Aorta (tissue), 5 donors: ENCODE measurements at regions of chr1 and their contacts with region 1.

Region 1: DNA sequence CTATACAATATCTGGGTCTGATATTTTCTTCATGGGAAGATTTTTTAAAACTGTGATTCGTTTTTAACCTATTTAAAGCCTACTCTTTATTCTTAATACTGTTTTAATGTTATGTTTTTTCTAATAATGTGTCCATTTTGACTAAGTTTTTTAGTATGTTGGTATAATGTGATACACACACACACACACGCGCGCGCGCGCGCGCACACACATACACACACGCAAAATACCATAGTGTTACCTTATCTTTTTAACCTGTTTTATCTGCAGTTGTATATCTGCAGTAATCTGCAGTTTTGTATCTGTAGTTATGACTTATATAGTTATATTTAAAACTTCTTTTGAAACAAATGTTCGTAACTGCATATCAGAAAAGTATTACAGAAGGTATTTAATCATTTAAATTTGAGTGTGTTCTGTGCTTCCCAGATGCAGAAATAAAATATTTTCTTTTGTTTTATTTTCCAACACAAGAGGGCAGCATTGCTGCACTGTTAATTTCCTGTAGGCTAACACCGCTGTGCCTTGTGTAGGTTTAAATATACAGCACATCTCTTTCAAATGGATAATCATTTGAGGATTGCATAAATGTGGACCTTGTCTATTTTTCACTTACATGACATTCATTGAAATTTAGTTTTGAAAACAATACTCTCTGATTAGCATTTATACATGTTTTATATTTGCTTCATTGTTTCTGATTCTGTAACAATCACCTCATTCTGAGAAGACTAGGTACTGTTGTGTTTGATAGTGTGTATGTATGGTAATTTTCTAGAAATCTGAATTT is 166.1 kb downstream of the PDE4B start:
- DNase-seq: no peak
- ATAC-seq: peak; percentile 76
- H3K4me3 ChIP-seq: no peak overlapping the region
- H3K27ac ChIP-seq: no peak overlapping the region
- H3K4me1 ChIP-seq: no peaks in the 10 kb centered on the region
- H3K27me3 ChIP-seq: no peaks in the 10 kb centered on the region

Region 2: GRCh38 chr1:66022904-66023620 is 64.3 kb after region 1 on chr1:
- intact Hi-C with region 1: no loop called
- DNase-seq: no peak
- ATAC-seq: no peak
- H3K4me3 ChIP-seq: no peak overlapping the region
- H3K27ac ChIP-seq: no peak overlapping the region
- H3K4me1 ChIP-seq: no peaks in the 10 kb centered on the region
- H3K27me3 ChIP-seq: no peaks in the 10 kb centered on the region

Region 3: DNA sequence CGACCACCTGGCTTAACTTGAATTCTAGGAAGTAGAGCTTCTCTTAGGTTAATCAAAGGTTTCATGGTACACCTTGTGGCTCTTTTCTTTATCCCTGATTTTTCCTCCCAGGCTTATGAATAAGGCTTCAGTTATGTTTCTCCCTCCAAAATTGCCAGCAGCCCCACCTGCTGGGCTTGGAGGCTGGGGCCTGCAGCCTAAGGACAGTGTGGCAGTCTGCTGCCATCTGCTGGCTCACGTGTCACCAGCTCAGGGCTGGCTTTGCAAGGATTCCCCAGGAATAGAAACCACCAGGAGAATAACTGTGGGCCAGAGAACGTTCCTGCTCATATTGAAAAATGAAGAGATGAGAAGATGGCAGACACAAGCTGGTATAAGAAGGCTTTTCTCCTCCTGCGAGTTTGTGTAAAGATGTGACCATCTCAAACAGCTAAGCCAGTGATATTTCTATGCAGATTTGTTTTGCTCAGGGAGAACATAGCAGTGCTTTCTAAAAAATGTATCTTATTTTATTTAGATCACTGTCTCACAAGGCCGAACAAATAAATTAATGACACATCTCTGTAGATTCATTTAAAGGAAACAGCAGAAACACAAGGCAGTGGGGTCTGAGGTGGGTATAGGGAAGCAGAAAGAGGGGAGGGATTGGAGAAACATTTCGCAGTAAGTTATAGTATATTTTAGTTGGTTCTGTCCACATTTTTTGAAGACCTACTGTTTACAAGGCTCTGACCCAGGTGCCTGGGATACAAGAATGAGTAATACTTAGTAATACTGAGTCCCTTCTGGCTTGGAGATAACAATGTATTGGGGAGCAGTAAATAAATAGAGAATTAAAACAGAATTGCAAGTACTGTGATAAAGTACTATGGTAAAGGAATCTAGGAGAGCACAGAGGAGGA is 284.1 kb after region 1 on chr1:
- intact Hi-C with region 1: loop called (anchors 1 to 2 kb)
- DNase-seq: peak; percentile 90 to 93
- ATAC-seq: peak; percentile 95
- H3K4me3 ChIP-seq: no peak overlapping the region
- H3K27ac ChIP-seq: no peak overlapping the region
- H3K4me1 ChIP-seq: no peaks in the 10 kb centered on the region
- H3K27me3 ChIP-seq: no peaks in the 10 kb centered on the region